ENCODE measurements at regions of chr2 and their contacts with region 1.

Region 1: GRCh38 chr2:207625018-207625907 is at the start of gene METTL21A:
- DNase-seq: peak; percentile 93
- H3K4me3 Mint-ChIP-seq: peak within 1 kb of the TSS; percentile 89
- H3K27ac Mint-ChIP-seq: peak within 1 kb of the TSS; percentile 95
- H3K4me1 Mint-ChIP-seq: peaks cover 40% of the 10 kb centered on the region
- H3K27me3 Mint-ChIP-seq: no peaks in the 10 kb centered on the region
- total RNA-seq, gene METTL21A: 33.2 and 36.1 TPM in 2 replicates

Region 2: GRCh38 chr2:206085742-206086445 is 1539.4 kb before region 1 on chr2 and contains the start of gene INO80D:
- intact Hi-C with region 1: loop called (anchors 10 kb)
- DNase-seq: peak; percentile 72
- H3K4me3 Mint-ChIP-seq: peak within 1 kb of the TSS; percentile 99
- H3K27ac Mint-ChIP-seq: peak within 1 kb of the TSS; percentile 99
- H3K4me1 Mint-ChIP-seq: peaks cover 30% of the 10 kb centered on the region
- H3K27me3 Mint-ChIP-seq: peaks cover 2% of the 10 kb centered on the region
- total RNA-seq, gene INO80D: 29.4 and 30.3 TPM in 2 replicates

Region 3: GRCh38 chr2:206274434-206275268 is 1350.6 kb before region 1 on chr2 and contains the start of gene ZDBF2:
- intact Hi-C with region 1: loop called (anchors 2 kb)
- DNase-seq: peak; percentile 46
- H3K4me3 Mint-ChIP-seq: peak within 1 kb of the TSS; percentile 87
- H3K27ac Mint-ChIP-seq: peak within 1 kb of the TSS; percentile 86
- H3K4me1 Mint-ChIP-seq: peaks cover 27% of the 10 kb centered on the region
- H3K27me3 Mint-ChIP-seq: peaks cover 48% of the 10 kb centered on the region
- total RNA-seq, gene ZDBF2: 9.3 and 11.4 TPM in 2 replicates

Region 4: DNA sequence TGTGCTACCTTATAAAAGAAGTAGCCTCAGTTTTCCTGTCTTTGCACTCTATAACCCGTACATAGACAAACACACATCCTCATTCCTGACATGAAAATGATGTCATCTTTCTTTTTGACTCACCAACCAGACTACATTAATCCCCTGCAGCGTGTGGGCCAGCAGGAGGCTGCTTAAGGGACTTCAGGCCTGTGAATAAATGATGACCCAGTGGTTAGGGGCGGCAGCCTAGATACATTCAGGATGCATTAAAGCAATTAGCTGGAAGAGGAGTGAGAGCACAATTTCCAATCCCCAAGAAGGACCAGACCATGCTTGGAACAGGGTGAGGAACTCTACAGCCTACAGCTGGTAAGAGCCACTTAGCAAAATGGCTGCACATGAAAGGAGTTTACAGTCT is 402.2 kb before region 1 on chr2:
- intact Hi-C with region 1: loop called (anchors 5 kb)
- DNase-seq: no peak
- H3K4me3 Mint-ChIP-seq: peak overlapping the region; percentile 60
- H3K27ac Mint-ChIP-seq: peak overlapping the region; percentile 84
- H3K4me1 Mint-ChIP-seq: peaks cover 46% of the 10 kb centered on the region
- H3K27me3 Mint-ChIP-seq: peaks cover 6% of the 10 kb centered on the region

Region 5: GRCh38 chr2:207594264-207594663 is 31.0 kb before region 1 on chr2:
- intact Hi-C with region 1: loop called (anchors 5 kb)
- DNase-seq: no peak
- H3K4me3 Mint-ChIP-seq: no peak overlapping the region
- H3K27ac Mint-ChIP-seq: no peak overlapping the region
- H3K4me1 Mint-ChIP-seq: peaks cover 16% of the 10 kb centered on the region
- H3K27me3 Mint-ChIP-seq: no peaks in the 10 kb centered on the region

Region 6: GRCh38 chr2:207769597-207770486 is 144.6 kb after region 1 on chr2 and contains the start of gene FZD5:
- intact Hi-C with region 1: loop called (anchors 1 kb)
- DNase-seq: peak; percentile 77
- H3K4me3 Mint-ChIP-seq: peak within 1 kb of the TSS; percentile 86
- H3K27ac Mint-ChIP-seq: peak within 1 kb of the TSS; percentile 31
- H3K4me1 Mint-ChIP-seq: peaks cover 25% of the 10 kb centered on the region
- H3K27me3 Mint-ChIP-seq: peaks cover 48% of the 10 kb centered on the region
- total RNA-seq, gene FZD5: 0.86 and 1.0 TPM in 2 replicates

Region 7: DNA sequence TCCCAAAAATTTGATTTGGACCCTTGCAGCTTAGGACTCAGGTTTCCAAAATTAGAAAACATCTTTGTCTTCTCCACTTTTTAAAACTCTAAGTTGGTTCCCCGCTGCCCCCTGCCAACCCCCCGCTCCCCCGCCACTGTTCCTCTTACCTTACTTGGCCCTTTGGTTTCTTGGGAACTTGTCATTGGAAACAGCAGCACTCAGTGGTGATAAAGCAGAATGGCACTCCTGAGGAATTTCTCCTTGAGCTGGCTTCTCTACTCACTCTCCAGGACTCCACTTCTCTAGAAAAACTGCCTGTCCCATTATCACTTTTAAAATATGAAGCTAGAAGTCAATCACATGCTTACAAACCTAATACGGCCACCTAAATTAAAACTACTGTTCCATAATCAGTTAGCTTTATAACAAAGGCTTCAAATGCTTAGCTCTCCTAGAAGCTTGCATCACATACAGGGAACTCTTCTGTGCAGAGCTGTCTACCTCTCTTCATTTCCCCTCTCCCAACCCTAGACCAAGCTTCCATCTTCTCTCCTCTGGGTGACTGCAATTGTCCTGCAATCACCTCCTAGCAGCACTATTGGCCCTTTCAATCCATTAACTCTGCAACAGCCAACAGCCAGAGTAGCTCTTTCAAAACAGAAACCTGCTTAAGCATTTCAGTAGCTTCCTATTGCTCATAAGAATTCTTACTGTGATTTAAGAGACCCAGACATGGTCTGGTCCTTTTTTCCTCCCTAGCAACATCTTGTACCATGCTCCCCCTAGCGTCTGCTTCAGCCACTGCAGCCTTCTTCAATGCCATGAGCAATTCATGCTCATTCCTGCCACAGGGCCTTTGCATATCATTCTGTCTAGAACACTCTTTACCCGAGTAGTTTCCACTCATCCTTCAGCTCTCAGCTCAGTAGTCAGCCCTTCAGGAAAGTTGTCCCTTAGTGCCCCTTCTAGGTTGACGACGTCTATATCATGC is 415.2 kb after region 1 on chr2:
- intact Hi-C with region 1: loop called (anchors 5 kb)
- DNase-seq: peak; percentile 56
- H3K4me3 Mint-ChIP-seq: no peak overlapping the region
- H3K27ac Mint-ChIP-seq: no peak overlapping the region
- H3K4me1 Mint-ChIP-seq: no peaks in the 10 kb centered on the region
- H3K27me3 Mint-ChIP-seq: peaks cover 4% of the 10 kb centered on the region

Region 8: DNA sequence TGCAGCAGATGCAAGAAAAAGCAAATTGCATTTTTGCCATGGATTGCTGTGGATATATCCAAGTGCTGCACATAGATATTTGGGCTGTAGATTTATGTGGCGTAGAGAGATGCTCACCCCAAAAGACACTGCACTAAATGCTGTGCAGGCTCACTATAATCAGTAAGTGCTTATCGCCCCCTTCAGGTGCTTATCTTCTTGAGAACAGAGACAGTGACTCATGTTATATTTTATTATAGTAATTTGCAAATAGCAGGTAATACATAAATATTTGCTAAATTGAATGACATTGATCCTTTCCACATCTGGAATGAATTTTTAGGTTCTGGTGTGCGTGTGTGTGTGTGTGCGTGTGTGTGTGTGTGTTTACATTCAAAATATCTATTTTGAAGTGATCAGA is 436.9 kb after region 1 on chr2:
- intact Hi-C with region 1: no loop called
- DNase-seq: no peak
- H3K4me3 Mint-ChIP-seq: no peak overlapping the region
- H3K27ac Mint-ChIP-seq: no peak overlapping the region
- H3K4me1 Mint-ChIP-seq: no peaks in the 10 kb centered on the region
- H3K27me3 Mint-ChIP-seq: peaks cover 4% of the 10 kb centered on the region

Region 9: GRCh38 chr2:208738536-208738935 is 1113.3 kb after region 1 on chr2:
- intact Hi-C with region 1: no loop called
- DNase-seq: no peak
- H3K4me3 Mint-ChIP-seq: no peak overlapping the region
- H3K27ac Mint-ChIP-seq: no peak overlapping the region
- H3K4me1 Mint-ChIP-seq: no peaks in the 10 kb centered on the region
- H3K27me3 Mint-ChIP-seq: no peaks in the 10 kb centered on the region